Prostate gland (tissue), 2 donors: ENCODE measurements at regions of chr2 and their contacts with region 1.

Region 1: GRCh38 chr2:222753251-222753824 is 81.9 kb downstream of the MOGAT1 start:
- DNase-seq: peak; percentile 39
- H3K4me3 ChIP-seq: no peak overlapping the region
- H3K27ac ChIP-seq: peak overlapping the region; percentile 60 to 75
- H3K4me1 ChIP-seq: no peaks in the 10 kb centered on the region
- H3K27me3 ChIP-seq: no peaks in the 10 kb centered on the region
- CTCF ChIP-seq: no peak
- POLR2A ChIP-seq: no peak

Region 2: DNA sequence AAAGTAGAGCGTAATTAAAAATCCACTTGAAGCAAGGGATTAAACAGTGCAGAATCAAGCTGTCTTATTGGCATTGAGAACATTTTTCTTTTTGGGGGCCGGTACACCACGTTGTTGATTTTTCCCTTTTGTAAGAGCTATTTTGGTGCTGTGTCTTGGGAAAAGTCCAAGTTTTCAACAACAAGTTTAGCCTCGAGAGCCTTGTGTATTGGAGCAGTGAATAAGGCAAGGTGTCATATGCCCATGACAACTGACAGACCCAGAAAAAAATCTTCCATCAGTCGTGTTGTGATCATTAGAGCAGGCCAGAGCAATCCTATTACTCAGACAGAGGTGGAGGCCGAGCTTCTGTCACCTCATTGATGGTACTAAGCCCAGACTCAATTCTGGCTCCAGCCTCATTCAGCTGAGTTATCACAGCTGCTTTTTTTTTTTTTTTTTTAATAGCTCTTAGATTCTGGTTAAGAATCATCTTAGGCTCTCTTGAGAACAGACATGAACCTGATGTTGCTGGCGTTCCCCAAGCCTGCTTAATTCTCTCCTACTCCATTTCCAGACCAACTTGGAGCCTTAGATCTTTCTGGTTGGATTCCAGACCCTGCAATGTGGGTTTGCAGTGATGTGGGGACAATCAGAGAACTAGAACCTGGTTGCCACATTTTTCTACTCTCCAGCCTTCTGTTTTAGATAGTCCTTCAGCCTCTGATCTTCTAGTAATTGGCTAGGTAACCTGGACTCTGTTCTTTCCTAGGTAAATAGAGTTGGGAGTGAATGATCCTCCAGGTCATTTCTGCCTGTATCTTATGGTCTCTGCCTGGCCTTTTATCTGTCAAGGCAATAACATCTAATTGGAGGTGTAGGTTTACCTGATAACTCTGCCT is 38.7 kb before region 1 on chr2:
- intact Hi-C with region 1: loop called (anchors 2 kb)
- DNase-seq: no peak
- H3K4me3 ChIP-seq: no peak overlapping the region
- H3K27ac ChIP-seq: peak overlapping the region in 1 of 2 donors; percentile 31
- H3K4me1 ChIP-seq: no peaks in the 10 kb centered on the region
- H3K27me3 ChIP-seq: no peaks in the 10 kb centered on the region
- CTCF ChIP-seq: no peak
- POLR2A ChIP-seq: no peak

Region 3: GRCh38 chr2:222866358-222866960 is 113.1 kb after region 1 on chr2:
- intact Hi-C with region 1: no loop called
- DNase-seq: no peak
- H3K4me3 ChIP-seq: no peak overlapping the region
- H3K27ac ChIP-seq: no peak overlapping the region
- H3K4me1 ChIP-seq: peaks cover 2% of the 10 kb centered on the region
- H3K27me3 ChIP-seq: no peaks in the 10 kb centered on the region
- CTCF ChIP-seq: no peak
- POLR2A ChIP-seq: no peak